Activated T-helper 1 cell treated with anti-CD3 and anti-CD28 coated beads, Interleukin-12 subunit alpha, Interleukin-12 subunit beta, Interleukin-2, Interleukin-4 antibody, amounts not matched to agents 30 ng/mL and 10 ng/mL and 1 ng/mL, durations not matched to agents 14 hours and 24 hours and 36 hours (primary cell): ENCODE measurements at regions of chr1 and their contacts with region 1.

Region 1: GRCh38 chr1:155208541-155209311 is at the start of gene MTX1:
- DNase-seq: peak; percentile 85
- H3K4me3 Mint-ChIP-seq: peak within 1 kb of the TSS; percentile 93
- H3K27ac Mint-ChIP-seq: peak within 1 kb of the TSS; percentile 97
- H3K4me1 Mint-ChIP-seq: peaks cover 25% of the 10 kb centered on the region
- H3K27me3 Mint-ChIP-seq: no peaks in the 10 kb centered on the region
- total RNA-seq, gene MTX1: 61.8 and 62.3 TPM in 2 replicates

Region 2: GRCh38 chr1:155172732-155173477 is 35.8 kb before region 1 on chr1 and contains the start of gene KRTCAP2:
- intact Hi-C with region 1: loop called (anchors 1 kb)
- DNase-seq: peak; percentile 94
- H3K4me3 Mint-ChIP-seq: peak within 1 kb of the TSS; percentile 96
- H3K27ac Mint-ChIP-seq: peak within 1 kb of the TSS; percentile 97
- H3K4me1 Mint-ChIP-seq: peaks cover 49% of the 10 kb centered on the region
- H3K27me3 Mint-ChIP-seq: no peaks in the 10 kb centered on the region
- total RNA-seq, gene KRTCAP2: 230 and 238 TPM in 2 replicates

Region 3: DNA sequence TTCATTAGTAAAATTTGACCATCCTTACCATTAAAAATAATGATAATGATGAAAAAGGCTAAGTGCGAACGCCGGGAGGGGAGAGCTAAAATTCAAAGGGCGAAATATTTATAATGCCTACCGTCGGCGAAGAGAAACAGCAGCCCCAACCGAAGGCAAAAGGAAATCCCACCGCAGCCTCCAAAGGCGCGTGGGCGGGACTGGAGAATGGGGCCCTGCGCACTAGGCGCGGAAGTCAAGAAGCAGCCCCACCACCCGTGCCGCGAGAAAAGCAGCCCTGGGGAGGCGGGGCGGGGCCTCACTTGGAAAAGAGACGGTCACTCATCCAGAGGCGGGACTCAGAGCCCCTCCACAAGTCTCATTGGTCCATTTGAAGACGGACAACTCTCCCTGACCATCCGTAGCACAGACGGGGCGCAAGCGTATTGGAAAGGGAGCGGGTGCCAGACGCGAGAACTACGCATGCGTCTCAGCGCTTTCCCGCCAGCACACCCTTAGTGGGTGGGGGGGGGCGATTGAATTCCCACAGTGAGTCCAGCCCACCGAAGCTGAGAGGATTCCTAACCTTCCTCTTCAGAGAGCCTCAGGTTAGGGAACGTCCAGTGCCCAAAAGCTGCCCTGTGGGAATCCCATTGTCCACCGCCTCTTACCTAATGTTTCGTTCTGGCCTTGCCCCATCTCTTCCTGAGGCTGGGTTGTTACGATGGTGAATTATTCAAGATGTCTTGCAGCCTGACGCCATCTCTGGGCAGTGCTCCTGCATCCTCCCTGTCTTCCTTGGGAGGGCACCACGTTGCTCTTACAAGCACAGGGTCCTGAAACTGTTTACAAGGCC is 18.8 kb after region 1 on chr1:
- intact Hi-C with region 1: loop called (anchors 1 kb)
- DNase-seq: peak; percentile 98
- H3K4me3 Mint-ChIP-seq: peak overlapping the region; percentile 95
- H3K27ac Mint-ChIP-seq: peak overlapping the region; percentile 92
- H3K4me1 Mint-ChIP-seq: peaks cover 15% of the 10 kb centered on the region
- H3K27me3 Mint-ChIP-seq: no peaks in the 10 kb centered on the region

Region 4: GRCh38 chr1:155261852-155262673 is 53.3 kb after region 1 on chr1 and contains the start of gene SCAMP3:
- intact Hi-C with region 1: loop called (anchors 5 kb)
- DNase-seq: peak; percentile 88
- H3K4me3 Mint-ChIP-seq: peak within 1 kb of the TSS; percentile 90
- H3K27ac Mint-ChIP-seq: peak within 1 kb of the TSS; percentile 88
- H3K4me1 Mint-ChIP-seq: peaks cover 38% of the 10 kb centered on the region
- H3K27me3 Mint-ChIP-seq: no peaks in the 10 kb centered on the region
- total RNA-seq, gene SCAMP3: 147 and 168 TPM in 2 replicates

Region 5: DNA sequence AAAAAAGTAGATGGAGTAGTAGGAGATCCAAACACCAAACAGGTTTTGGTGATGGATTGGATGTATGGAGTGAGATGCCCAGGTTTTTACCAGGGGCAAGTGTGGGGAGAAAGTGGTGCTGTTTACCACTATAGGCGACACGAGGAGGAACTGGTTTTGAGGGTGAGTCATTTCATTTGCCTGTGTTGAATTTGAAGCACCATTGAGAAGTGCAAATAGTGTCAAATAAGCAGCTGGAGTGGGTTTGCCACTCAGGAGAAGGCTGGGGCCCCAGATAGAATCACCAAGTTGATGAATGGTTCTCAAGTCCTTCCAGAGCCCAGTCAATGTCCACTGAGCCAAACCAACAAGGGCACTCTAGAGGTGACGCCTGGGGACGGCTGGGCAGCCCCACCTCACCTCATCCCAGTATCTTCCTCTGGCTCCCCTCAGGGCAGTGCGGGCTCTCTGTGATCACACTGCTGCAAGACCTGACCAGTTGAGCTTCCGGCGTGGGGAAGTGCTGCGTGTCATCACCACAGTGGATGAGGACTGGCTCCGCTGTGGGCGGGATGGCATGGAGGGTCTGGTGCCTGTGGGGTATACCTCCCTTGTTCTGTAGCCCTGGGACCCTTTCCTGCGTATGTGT is 121.4 kb after region 1 on chr1:
- intact Hi-C with region 1: no loop called
- DNase-seq: no peak
- H3K4me3 Mint-ChIP-seq: no peak overlapping the region
- H3K27ac Mint-ChIP-seq: no peak overlapping the region
- H3K4me1 Mint-ChIP-seq: peaks cover 9% of the 10 kb centered on the region
- H3K27me3 Mint-ChIP-seq: no peaks in the 10 kb centered on the region

Region 6: GRCh38 chr1:155591770-155592169 is 383.0 kb after region 1 on chr1:
- intact Hi-C with region 1: loop called (anchors 1 kb)
- DNase-seq: peak; percentile 25
- H3K4me3 Mint-ChIP-seq: no peak overlapping the region
- H3K27ac Mint-ChIP-seq: no peak overlapping the region
- H3K4me1 Mint-ChIP-seq: peaks cover 4% of the 10 kb centered on the region
- H3K27me3 Mint-ChIP-seq: no peaks in the 10 kb centered on the region